PC-9 (cell line): ENCODE measurements at regions of chr13 and their contacts with region 1.

Region 1: GRCh38 chr13:33542283-33543088 is 256.9 kb upstream of the STARD13 start:
- DNase-seq: peak; percentile 95 to 96
- H3K4me3 ChIP-seq: peak overlapping the region; percentile 74
- H3K27ac ChIP-seq: peak overlapping the region; percentile 99
- H3K4me1 ChIP-seq: peaks cover 28% of the 10 kb centered on the region
- H3K27me3 ChIP-seq: no peaks in the 10 kb centered on the region
- CTCF ChIP-seq: peak; percentile 76

Region 2: DNA sequence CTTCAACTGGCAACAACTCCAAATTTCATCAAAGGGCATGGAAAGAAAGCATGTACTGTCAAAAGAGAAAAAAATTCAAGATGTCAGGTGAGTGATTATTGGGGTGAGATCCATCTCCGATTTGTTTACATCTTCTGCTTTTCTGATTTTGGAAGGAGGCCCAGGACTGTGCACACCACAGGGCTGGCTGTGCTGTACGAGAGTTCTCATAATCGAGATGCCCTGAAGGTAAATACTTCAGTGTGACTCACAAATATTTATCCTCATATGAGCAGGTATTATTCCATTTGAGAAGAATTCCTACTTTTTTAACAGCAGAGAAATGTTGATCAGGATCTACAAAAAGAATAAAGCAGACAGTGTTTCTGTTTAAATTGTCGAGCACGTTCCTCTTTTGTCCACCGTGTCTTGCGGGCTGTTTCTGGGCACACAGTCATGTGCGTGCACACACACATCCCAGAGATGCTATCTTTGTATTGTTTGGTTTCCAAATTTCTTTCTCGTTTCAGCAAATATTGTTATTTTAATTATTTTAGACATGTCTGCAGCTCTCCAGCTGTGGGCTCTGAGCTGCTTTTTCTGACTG is 422.5 kb before region 1 on chr13:
- CTCF ChIA-PET with region 1: no interaction called
- POLR2A ChIA-PET with region 1: no interaction called
- intact Hi-C with region 1: loop called (anchors 1 kb)
- DNase-seq: peak; percentile 62 to 97
- H3K4me3 ChIP-seq: peak overlapping the region; percentile 32; the same call in 1 of the 2 replicates
- H3K27ac ChIP-seq: peak overlapping the region; percentile 98
- H3K4me1 ChIP-seq: peaks cover 65% of the 10 kb centered on the region
- H3K27me3 ChIP-seq: no peaks in the 10 kb centered on the region
- CTCF ChIP-seq: no peak

Region 3: GRCh38 chr13:33218001-33218400 is 324.5 kb before region 1 on chr13:
- CTCF ChIA-PET with region 1: no interaction called
- POLR2A ChIA-PET with region 1: interaction called, 7 read pairs
- intact Hi-C with region 1: loop called (anchors 1 kb)
- DNase-seq: peak; percentile 69 to 99
- H3K4me3 ChIP-seq: peak overlapping the region; percentile 26; the same call in 1 of the 2 replicates
- H3K27ac ChIP-seq: peak overlapping the region; percentile 97
- H3K4me1 ChIP-seq: peaks cover 63% of the 10 kb centered on the region
- H3K27me3 ChIP-seq: no peaks in the 10 kb centered on the region
- CTCF ChIP-seq: no peak

Region 4: DNA sequence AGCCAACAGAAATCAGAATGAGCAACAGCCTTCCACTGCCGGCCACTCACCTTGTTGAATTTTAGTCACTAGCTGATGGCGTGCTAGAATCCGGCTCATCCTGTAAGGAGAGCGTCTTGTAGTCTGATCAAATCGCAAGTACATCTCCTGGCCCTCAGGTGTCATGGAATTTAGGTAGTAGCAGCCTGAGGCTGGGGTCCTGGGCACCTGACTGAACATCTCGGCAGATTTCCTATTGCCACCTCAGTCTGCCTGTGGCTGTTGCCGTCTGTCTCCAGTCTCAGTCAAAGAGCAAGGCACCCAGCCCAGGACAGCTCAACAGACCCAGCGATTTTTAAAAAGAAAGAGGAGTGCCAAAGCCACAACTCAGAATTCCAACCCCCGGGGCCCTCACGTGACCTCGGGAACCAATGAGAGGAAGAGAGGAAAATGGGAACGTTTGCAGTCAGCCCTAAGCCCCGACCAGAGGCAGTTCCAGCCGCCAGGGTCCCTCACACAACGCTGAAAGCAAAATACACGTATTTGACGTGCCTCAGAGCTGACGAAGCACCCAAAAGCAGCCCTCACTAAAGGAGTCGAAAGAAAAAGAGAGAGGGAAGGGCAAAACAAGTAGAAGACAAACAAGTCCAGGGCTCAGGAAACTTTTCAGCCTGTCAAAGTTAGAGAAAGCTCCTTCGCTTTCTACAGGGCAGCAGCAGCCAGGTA is 256.9 kb before region 1 on chr13 and contains the start of gene STARD13:
- CTCF ChIA-PET with region 1: no interaction called
- POLR2A ChIA-PET with region 1: no interaction called
- intact Hi-C with region 1: loop called (anchors 1 kb)
- DNase-seq: peak; percentile 91 to 93
- H3K4me3 ChIP-seq: peak within 1 kb of the TSS; percentile 94
- H3K27ac ChIP-seq: peak within 1 kb of the TSS; percentile 81
- H3K4me1 ChIP-seq: peaks cover 52% of the 10 kb centered on the region
- H3K27me3 ChIP-seq: no peaks in the 10 kb centered on the region
- CTCF ChIP-seq: no peak; the same call in 1 of the 2 replicates
- total RNA-seq, gene STARD13: 13.9 and 19.6 TPM in 2 replicates

Region 5: GRCh38 chr13:33723772-33724435 is 181.4 kb after region 1 on chr13:
- CTCF ChIA-PET with region 1: interaction called, 3 read pairs
- POLR2A ChIA-PET with region 1: no interaction called
- intact Hi-C with region 1: loop called (anchors 1 kb)
- DNase-seq: peak; percentile 47 to 75
- H3K4me3 ChIP-seq: no peak overlapping the region
- H3K27ac ChIP-seq: no peak overlapping the region
- H3K4me1 ChIP-seq: peaks cover 7% of the 10 kb centered on the region; the same call in 1 of the 2 replicates
- H3K27me3 ChIP-seq: no peaks in the 10 kb centered on the region
- CTCF ChIP-seq: peak; percentile 83